H1 (cell line): ENCODE measurements at regions of chr1 and their contacts with region 1.

Region 1: DNA sequence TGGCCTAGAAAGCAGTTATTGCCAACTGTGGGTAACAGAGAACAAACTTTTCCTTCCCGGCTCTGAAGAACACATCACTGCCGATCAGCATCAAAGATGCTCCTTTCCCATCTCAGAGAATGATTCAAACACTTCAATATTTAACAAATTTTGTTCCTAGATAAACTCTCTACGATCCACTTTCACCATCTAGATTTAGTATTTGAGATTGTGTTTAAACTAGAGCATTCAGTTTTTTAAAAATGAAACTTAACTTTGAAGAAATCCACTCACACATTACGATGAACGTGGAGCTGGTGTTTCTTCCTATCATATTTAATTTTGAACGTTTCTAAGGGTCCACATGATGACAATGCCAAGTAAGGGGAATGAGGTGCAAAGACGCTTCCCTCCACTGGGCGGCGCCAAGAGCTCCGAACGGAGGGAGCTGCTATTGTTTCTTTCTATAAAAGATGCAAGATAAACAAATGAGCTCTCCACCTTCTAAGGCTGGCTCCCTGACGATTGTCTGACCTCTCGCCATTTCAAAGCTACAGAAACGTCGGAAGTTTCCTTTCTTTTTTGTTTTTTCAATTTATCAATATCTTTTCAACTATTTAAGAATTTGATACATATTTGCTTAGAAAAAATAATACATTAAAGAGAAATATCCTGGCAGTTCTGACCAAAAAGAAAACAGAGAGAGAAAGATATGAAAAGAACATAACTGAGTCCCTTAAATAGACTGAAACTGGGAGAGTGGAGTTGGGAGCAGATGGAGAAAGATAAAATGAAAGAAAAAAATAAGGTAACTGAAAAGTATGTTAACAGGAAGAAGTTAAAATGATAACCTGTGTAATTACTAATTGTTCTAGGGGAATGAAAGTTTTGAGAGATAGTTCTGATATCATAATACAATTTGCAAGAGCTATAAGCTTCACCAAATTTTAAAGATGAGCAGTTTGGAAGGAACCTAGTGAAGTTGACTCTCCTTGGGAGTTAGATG is 4.4 kb upstream of the BARHL2 start:
- DNase-seq: peak in 1 of 2 experiments; percentile 82
- H3K4me3 ChIP-seq: no peak overlapping the region
- H3K27ac ChIP-seq: no peak overlapping the region
- H3K4me1 ChIP-seq: peaks cover 23 to 44% (median 33%) of the 10 kb centered on the region in 4 experiments
- H3K27me3 ChIP-seq: peaks cover 89 to 99% (median 96%) of the 10 kb centered on the region in 4 experiments
- CTCF ChIP-seq: peak; percentile 74 to 88 (median 83)
- EP300 ChIP-seq: no peak
- POLR2A ChIP-seq: no peak
- RAD21 ChIP-seq: peak; percentile 79 to 82

Region 2: DNA sequence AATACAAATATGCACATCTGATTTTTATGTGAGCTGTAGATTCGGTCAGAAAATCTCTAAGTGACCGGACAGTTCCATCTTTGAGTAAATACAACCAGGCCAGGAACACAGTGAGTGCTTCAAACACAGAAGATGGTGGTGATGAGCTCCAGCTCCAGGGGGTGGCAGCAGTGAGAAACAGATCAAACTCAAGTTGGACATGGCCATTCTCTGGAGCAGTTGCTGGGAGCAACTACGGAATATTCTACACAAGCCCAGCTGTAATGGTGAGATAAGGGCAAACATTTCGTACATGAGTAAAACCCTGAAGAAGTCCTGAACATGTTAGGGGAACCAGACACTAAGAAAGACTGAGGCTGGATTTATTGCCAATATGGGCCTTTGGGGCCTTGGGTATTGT is 105.1 kb before region 1 on chr1:
- CTCF ChIA-PET with region 1: interaction called, 13 read pairs
- POLR2A ChIA-PET with region 1: no interaction called
- DNase-seq: peak; percentile 25 to 69
- H3K4me3 ChIP-seq: no peak overlapping the region
- H3K27ac ChIP-seq: no peak overlapping the region
- H3K4me1 ChIP-seq: peaks cover 0 to 8% (median 3%) of the 10 kb centered on the region in 4 experiments; a peak in 2 of 7 replicates
- H3K27me3 ChIP-seq: no peaks in the 10 kb centered on the region; a peak in 1 of 7 replicates
- CTCF ChIP-seq: peak; percentile 63 to 75 (median 66)
- EP300 ChIP-seq: no peak
- POLR2A ChIP-seq: no peak
- RAD21 ChIP-seq: peak; percentile 65 to 72

Region 3: GRCh38 chr1:90671741-90672140 is 49.8 kb before region 1 on chr1:
- CTCF ChIA-PET with region 1: no interaction called
- POLR2A ChIA-PET with region 1: no interaction called
- DNase-seq: no peak
- H3K4me3 ChIP-seq: no peak overlapping the region
- H3K27ac ChIP-seq: no peak overlapping the region
- H3K4me1 ChIP-seq: no peaks in the 10 kb centered on the region
- H3K27me3 ChIP-seq: no peaks in the 10 kb centered on the region
- CTCF ChIP-seq: no peak
- EP300 ChIP-seq: no peak
- POLR2A ChIP-seq: no peak
- RAD21 ChIP-seq: no peak

Region 4: GRCh38 chr1:90707363-90707710 is 14.2 kb before region 1 on chr1:
- CTCF ChIA-PET with region 1: interaction called, 122 read pairs
- POLR2A ChIA-PET with region 1: interaction called, 8 read pairs
- DNase-seq: peak in 1 of 2 experiments; percentile 88
- H3K4me3 ChIP-seq: peak overlapping the region in 3 of 4 experiments; percentile 23 to 54 (median 27); a peak in 4 of 8 replicates
- H3K27ac ChIP-seq: no peak overlapping the region
- H3K4me1 ChIP-seq: peaks cover 8 to 25% (median 18%) of the 10 kb centered on the region in 4 experiments
- H3K27me3 ChIP-seq: peaks cover 68 to 87% (median 80%) of the 10 kb centered on the region in 4 experiments
- CTCF ChIP-seq: no peak
- EP300 ChIP-seq: no peak
- POLR2A ChIP-seq: no peak
- RAD21 ChIP-seq: 0 out of 4 replicates have a peak, but pooled peaks of 1 of the 2 experiments have one; percentile 5

Region 5: DNA sequence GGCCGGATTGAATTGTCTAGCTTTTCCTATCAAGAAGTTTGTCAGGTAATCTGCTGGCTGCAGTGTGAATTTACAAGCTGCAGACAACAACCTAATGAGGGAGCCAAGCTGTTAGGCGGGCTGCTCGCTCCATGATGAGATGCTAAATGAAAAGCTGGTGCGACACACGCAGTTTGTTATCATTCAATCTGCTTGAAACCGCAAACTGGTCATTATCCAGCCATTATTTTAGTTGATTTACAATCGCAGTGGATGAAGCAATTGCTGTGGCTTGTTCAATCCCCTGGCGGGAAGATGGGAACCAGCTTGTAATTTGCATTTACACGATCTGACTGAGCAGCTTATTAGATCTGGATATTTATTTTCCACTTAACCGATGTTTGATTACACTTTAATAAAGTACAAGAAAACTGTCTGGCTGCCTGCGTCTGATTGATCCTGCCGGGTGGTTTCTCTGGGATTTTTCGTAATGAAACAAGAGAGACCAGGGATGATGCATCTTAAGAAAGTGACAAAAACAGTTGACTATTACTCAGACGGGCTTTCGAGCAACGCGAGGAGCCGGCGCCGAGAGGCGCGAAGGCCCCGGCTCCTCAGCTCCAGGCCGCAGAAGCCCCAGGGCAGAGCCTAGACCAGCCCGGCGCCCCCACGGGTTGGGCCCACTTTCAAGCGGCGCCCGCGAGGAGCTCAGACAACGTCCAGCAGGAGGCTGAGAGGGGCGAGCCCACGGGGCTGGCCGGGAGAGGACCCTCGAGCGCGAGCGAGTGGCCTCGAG is 113.6 kb after region 1 on chr1:
- CTCF ChIA-PET with region 1: interaction called, 19 read pairs
- POLR2A ChIA-PET with region 1: interaction called, 3 read pairs
- DNase-seq: peak in 1 of 2 experiments; percentile 71
- H3K4me3 ChIP-seq: peak overlapping the region; percentile 14 to 60 (median 40); a peak in 7 of 8 replicates
- H3K27ac ChIP-seq: no peak overlapping the region
- H3K4me1 ChIP-seq: peaks cover 12 to 32% (median 25%) of the 10 kb centered on the region in 4 experiments; a peak in 6 of 7 replicates
- H3K27me3 ChIP-seq: peaks cover 51 to 90% (median 78%) of the 10 kb centered on the region in 4 experiments
- CTCF ChIP-seq: no peak
- EP300 ChIP-seq: no peak
- POLR2A ChIP-seq: no peak
- RAD21 ChIP-seq: no peak

Region 6: DNA sequence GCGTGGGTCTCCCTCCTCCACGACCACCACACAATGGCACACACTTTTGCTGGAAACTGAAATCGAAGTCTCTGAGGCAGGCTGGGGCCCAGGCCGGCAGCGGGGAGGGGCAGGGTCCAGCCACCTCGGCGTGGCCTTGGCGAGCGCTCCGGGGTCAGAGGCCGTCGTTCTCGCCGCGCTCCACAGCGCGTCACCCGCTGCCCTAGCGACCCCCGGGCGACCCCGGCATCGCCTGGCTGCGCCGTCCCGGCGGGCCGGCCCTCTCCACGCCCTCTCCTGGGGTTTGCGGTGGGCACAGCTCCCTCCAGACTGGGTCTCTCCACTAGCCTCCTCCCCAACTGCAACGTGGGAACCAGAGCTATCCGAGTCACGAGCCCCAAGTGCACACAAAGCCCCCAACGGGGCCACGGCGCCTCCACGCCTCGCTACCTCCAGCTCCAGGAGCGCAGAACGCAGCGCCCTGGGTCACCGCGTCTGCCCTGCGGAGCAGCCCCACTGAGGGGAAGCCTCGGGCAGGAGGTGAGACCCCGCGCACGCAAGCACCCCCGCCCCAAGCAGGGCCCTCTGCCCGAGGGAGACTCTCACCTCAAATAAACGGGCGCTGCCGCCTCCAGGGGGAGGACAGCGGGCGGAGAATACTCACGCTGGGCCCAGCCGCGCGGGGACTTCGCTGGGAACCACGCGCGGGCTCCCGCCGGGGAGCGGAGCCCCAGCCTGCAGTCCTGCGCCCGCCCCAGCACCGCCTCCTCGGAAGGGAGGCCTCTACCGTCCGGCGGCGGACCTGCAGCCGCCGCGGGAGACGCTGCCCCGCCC is 129.6 kb after region 1 on chr1:
- CTCF ChIA-PET with region 1: interaction called, 139 read pairs
- POLR2A ChIA-PET with region 1: interaction called, 3 read pairs
- DNase-seq: peak in 1 of 2 experiments; percentile 87
- H3K4me3 ChIP-seq: peak overlapping the region; percentile 56 to 74 (median 68)
- H3K27ac ChIP-seq: no peak overlapping the region
- H3K4me1 ChIP-seq: peaks cover 0 to 5% (median 2%) of the 10 kb centered on the region in 4 experiments; a peak in 3 of 7 replicates
- H3K27me3 ChIP-seq: peaks cover 17 to 33% (median 23%) of the 10 kb centered on the region in 4 experiments
- CTCF ChIP-seq: peak; percentile 49 to 77 (median 51)
- EP300 ChIP-seq: no peak
- POLR2A ChIP-seq: no peak
- RAD21 ChIP-seq: peak; percentile 33 to 52; a peak in 3 of 4 replicates

Region 7: GRCh38 chr1:91282695-91283420 is 561.4 kb after region 1 on chr1:
- CTCF ChIA-PET with region 1: interaction called, 22 read pairs
- POLR2A ChIA-PET with region 1: no interaction called
- DNase-seq: peak; percentile 49 to 59
- H3K4me3 ChIP-seq: no peak overlapping the region
- H3K27ac ChIP-seq: no peak overlapping the region
- H3K4me1 ChIP-seq: no peaks in the 10 kb centered on the region
- H3K27me3 ChIP-seq: no peaks in the 10 kb centered on the region
- CTCF ChIP-seq: peak in 2 of 3 experiments; percentile 78 to 92; a peak in 3 of 4 replicates
- EP300 ChIP-seq: 0 out of 3 replicates have a peak, but pooled peaks of 1 of the 2 experiments have one; percentile 5
- POLR2A ChIP-seq: no peak
- RAD21 ChIP-seq: peak; percentile 93 to 94